ENCODE measurements at regions of chr12 and their contacts with region 1.

Region 1: GRCh38 chr12:39692258-39692853 is 72.8 kb upstream of the ABCD2 start:
- DNase-seq: peak in 5 of 9 donors; percentile 29 to 47 (median 43)
- ATAC-seq: peak; percentile 64
- H3K4me3 ChIP-seq: no peak overlapping the region
- H3K4me3 Mint-ChIP-seq: peak overlapping the region in 1 of 10 donors; percentile 15
- H3K27ac ChIP-seq: no peak overlapping the region
- H3K27ac Mint-ChIP-seq: no peak overlapping the region
- H3K4me1 ChIP-seq: peaks cover 0 to 3% of the 10 kb centered on the region in 2 donors
- H3K4me1 Mint-ChIP-seq: peaks cover 0 to 7% (median 5%) of the 10 kb centered on the region in 7 donors
- H3K27me3 ChIP-seq: no peaks in the 10 kb centered on the region
- H3K27me3 Mint-ChIP-seq: peaks cover 0 to 12% (median 8%) of the 10 kb centered on the region in 5 donors

Region 2: DNA sequence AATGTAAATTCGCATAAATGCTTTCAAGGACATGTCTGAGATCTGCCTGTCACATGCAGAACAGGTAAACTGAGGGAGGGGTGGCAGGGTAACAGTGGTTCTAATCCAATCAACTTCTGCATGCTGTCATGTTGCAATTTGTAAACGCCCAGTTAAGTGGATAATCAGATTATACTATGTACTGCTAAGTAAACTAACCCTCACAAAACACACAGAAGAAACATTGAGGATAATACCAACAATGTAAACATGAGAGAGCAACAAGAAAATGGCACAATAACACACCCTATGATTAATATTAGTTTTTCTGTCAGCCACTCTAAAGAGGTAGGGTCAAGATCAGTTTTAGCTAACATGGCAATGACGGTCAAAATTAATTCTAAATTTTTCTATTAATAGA is 373.2 kb before region 1 on chr12:
- CTCF ChIA-PET with region 1: interaction called, 5 read pairs
- POLR2A ChIA-PET with region 1: no interaction called
- intact Hi-C with region 1: loop called (anchors 1 kb)
- DNase-seq: no peak
- ATAC-seq: no peak
- H3K4me3 ChIP-seq: no peak overlapping the region
- H3K4me3 Mint-ChIP-seq: no peak overlapping the region
- H3K27ac ChIP-seq: no peak overlapping the region
- H3K27ac Mint-ChIP-seq: no peak overlapping the region
- H3K4me1 ChIP-seq: no peaks in the 10 kb centered on the region
- H3K4me1 Mint-ChIP-seq: peaks cover 0 to 5% (median 0%) of the 10 kb centered on the region in 7 donors
- H3K27me3 ChIP-seq: no peaks in the 10 kb centered on the region
- H3K27me3 Mint-ChIP-seq: no peaks in the 10 kb centered on the region

Region 3: GRCh38 chr12:39365364-39366001 is 326.9 kb before region 1 on chr12:
- CTCF ChIA-PET with region 1: no interaction called
- POLR2A ChIA-PET with region 1: no interaction called
- intact Hi-C with region 1: loop called in 1 of 2 experiments (anchors 1 kb)
- DNase-seq: peak in 1 of 9 donors; percentile 2
- ATAC-seq: no peak
- H3K4me3 ChIP-seq: no peak overlapping the region
- H3K4me3 Mint-ChIP-seq: no peak overlapping the region
- H3K27ac ChIP-seq: no peak overlapping the region
- H3K27ac Mint-ChIP-seq: no peak overlapping the region
- H3K4me1 ChIP-seq: no peaks in the 10 kb centered on the region
- H3K4me1 Mint-ChIP-seq: peaks cover 0 to 5% (median 0%) of the 10 kb centered on the region in 7 donors
- H3K27me3 ChIP-seq: no peaks in the 10 kb centered on the region
- H3K27me3 Mint-ChIP-seq: no peaks in the 10 kb centered on the region

Region 4: GRCh38 chr12:39671898-39672875 is 20.2 kb before region 1 on chr12:
- CTCF ChIA-PET with region 1: interaction called, 8 read pairs
- POLR2A ChIA-PET with region 1: interaction called, 5 read pairs
- intact Hi-C with region 1: loop called in 1 of 2 experiments (anchors 2 kb)
- DNase-seq: no peak
- ATAC-seq: no peak
- H3K4me3 ChIP-seq: no peak overlapping the region
- H3K4me3 Mint-ChIP-seq: peak overlapping the region in 1 of 10 donors; percentile 42
- H3K27ac ChIP-seq: no peak overlapping the region
- H3K27ac Mint-ChIP-seq: peak overlapping the region in 4 of 9 donors; percentile 32 to 85 (median 55)
- H3K4me1 ChIP-seq: peaks cover 13 to 16% of the 10 kb centered on the region in 2 donors
- H3K4me1 Mint-ChIP-seq: peaks cover 25 to 77% (median 50%) of the 10 kb centered on the region in 7 donors
- H3K27me3 ChIP-seq: no peaks in the 10 kb centered on the region
- H3K27me3 Mint-ChIP-seq: no peaks in the 10 kb centered on the region

Region 5: GRCh38 chr12:39990122-39991101 is 298.1 kb after region 1 on chr12:
- CTCF ChIA-PET with region 1: interaction called, 3 read pairs
- POLR2A ChIA-PET with region 1: no interaction called
- intact Hi-C with region 1: loop called in 1 of 2 experiments (anchors 5 kb)
- DNase-seq: peak; percentile 4 to 51 (median 42)
- ATAC-seq: peak; percentile 89
- H3K4me3 ChIP-seq: no peak overlapping the region
- H3K4me3 Mint-ChIP-seq: no peak overlapping the region
- H3K27ac ChIP-seq: no peak overlapping the region
- H3K27ac Mint-ChIP-seq: no peak overlapping the region
- H3K4me1 ChIP-seq: no peaks in the 10 kb centered on the region
- H3K4me1 Mint-ChIP-seq: peaks cover 0 to 7% (median 6%) of the 10 kb centered on the region in 7 donors
- H3K27me3 ChIP-seq: no peaks in the 10 kb centered on the region
- H3K27me3 Mint-ChIP-seq: no peaks in the 10 kb centered on the region

Region 6: GRCh38 chr12:41011939-41012338 is 1319.6 kb after region 1 on chr12:
- CTCF ChIA-PET with region 1: no interaction called
- POLR2A ChIA-PET with region 1: no interaction called
- intact Hi-C with region 1: no loop called
- DNase-seq: no peak
- ATAC-seq: no peak
- H3K4me3 ChIP-seq: no peak overlapping the region
- H3K4me3 Mint-ChIP-seq: no peak overlapping the region
- H3K27ac ChIP-seq: no peak overlapping the region
- H3K27ac Mint-ChIP-seq: no peak overlapping the region
- H3K4me1 ChIP-seq: no peaks in the 10 kb centered on the region
- H3K4me1 Mint-ChIP-seq: no peaks in the 10 kb centered on the region
- H3K27me3 ChIP-seq: no peaks in the 10 kb centered on the region
- H3K27me3 Mint-ChIP-seq: no peaks in the 10 kb centered on the region

Measured in naive thymus-derived CD4-positive, alpha-beta T cell (primary cell).